Activated T-helper 1 cell treated with anti-CD3 and anti-CD28 coated beads, Interleukin-12 subunit alpha, Interleukin-12 subunit beta, Interleukin-2, Interleukin-4 antibody, amounts not matched to agents 30 ng/mL and 10 ng/mL and 1 ng/mL, durations not matched to agents 14 hours and 24 hours and 36 hours (primary cell): ENCODE measurements at regions of chr15 and their contacts with region 1.

Region 1: DNA sequence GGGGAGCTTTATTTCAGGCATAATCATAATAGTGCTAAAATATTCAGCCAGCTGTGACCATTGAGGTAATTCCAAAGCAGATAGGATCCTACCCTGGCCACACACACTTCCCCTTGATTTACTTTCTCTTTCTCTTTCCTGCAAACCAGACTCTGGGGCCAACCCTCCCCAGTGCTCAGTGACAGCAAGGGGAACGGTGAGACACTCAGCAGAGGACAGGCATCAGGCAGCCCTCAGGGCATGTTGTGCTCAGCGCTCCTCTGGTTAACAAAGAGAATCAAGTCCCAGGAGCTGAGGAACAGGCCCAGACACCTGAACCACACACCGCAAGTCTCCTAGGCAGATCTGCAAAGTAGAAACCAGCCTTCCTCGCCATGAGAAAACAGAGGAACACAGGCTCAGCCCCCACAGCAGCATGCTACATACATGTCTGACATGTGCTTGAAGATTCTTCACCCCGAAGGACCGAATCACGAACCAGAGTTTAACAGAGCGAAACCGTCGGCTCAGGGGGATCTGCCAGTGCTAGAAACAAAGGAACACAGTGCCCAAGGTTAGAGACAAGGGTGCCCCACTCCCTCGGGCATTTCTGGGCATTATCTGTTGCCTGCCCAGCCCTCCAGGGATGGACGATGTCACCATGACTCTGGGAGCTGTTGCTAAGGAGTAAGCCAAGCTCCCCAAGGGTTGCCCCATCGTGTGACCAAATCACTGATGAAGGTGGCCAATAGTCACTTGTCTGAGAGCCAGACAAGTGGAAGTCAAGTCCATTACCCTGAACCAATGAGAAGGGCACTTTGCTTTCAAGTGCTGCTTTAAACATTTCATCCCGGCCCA is 17.5 kb downstream of the HDC start:
- DNase-seq: peak; percentile 59
- H3K4me3 Mint-ChIP-seq: peak overlapping the region; percentile 67
- H3K27ac Mint-ChIP-seq: peak overlapping the region; percentile 97
- H3K4me1 Mint-ChIP-seq: peaks cover 65% of the 10 kb centered on the region
- H3K27me3 Mint-ChIP-seq: no peaks in the 10 kb centered on the region

Region 2: DNA sequence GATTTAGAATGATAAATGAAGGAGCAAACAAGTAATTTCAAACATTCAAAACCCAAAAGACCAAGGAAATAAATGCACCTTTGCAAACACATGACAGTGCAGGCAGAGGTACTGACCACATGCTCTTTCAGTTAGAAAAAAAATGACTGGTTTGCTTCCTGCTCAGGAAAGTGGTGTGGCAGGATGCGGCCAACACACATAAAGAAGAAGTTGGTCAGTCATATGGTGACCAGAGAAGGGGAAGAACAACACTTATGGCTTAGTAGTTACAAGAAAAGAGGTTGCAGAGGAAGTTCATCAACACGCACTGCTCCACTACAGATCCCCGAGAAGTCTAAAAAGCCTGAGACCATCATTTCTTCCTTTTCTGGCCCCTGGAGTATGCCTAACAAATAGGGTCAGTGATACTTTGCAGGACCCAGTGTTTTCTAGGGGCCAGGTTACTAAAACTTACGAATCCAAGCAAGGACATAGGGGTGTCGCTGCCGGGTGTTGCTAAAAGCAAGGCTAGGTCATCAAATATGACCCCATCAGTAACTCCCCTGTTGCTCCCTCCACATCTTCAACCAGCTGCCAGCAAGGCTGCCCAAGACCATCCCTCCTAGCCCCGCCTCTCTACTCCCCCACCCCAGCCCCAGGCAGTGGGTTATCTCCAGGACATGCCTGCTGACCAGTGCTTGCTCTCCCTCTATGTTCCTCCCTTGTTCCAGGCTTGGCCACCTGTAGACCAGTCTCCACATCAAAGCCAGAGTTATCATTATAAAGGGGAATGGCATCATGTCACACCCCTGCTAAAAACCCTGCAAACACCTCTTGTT is 140.2 kb before region 1 on chr15:
- intact Hi-C with region 1: loop called (anchors 5 kb)
- DNase-seq: peak; percentile 44
- H3K4me3 Mint-ChIP-seq: peak overlapping the region; percentile 75
- H3K27ac Mint-ChIP-seq: peak overlapping the region; percentile 93
- H3K4me1 Mint-ChIP-seq: peaks cover 93% of the 10 kb centered on the region
- H3K27me3 Mint-ChIP-seq: no peaks in the 10 kb centered on the region

Region 3: GRCh38 chr15:50234771-50235170 is 13.3 kb before region 1 on chr15:
- intact Hi-C with region 1: no loop called
- DNase-seq: no peak
- H3K4me3 Mint-ChIP-seq: no peak overlapping the region
- H3K27ac Mint-ChIP-seq: no peak overlapping the region
- H3K4me1 Mint-ChIP-seq: peaks cover 6% of the 10 kb centered on the region
- H3K27me3 Mint-ChIP-seq: no peaks in the 10 kb centered on the region

Region 4: GRCh38 chr15:50315814-50316630 is 68.0 kb after region 1 on chr15:
- intact Hi-C with region 1: loop called (anchors 5 kb)
- DNase-seq: no peak
- H3K4me3 Mint-ChIP-seq: no peak overlapping the region
- H3K27ac Mint-ChIP-seq: no peak overlapping the region
- H3K4me1 Mint-ChIP-seq: peaks cover 44% of the 10 kb centered on the region
- H3K27me3 Mint-ChIP-seq: no peaks in the 10 kb centered on the region

Region 5: GRCh38 chr15:50463423-50464358 is 215.7 kb after region 1 on chr15:
- intact Hi-C with region 1: no loop called
- DNase-seq: no peak
- H3K4me3 Mint-ChIP-seq: no peak overlapping the region
- H3K27ac Mint-ChIP-seq: peak overlapping the region; percentile 61
- H3K4me1 Mint-ChIP-seq: peaks cover 31% of the 10 kb centered on the region
- H3K27me3 Mint-ChIP-seq: no peaks in the 10 kb centered on the region